Heart left ventricle (tissue), 16 donors: ENCODE measurements at regions of chr18 and their contacts with region 1.

Region 1: GRCh38 chr18:1779587-1779986 is 791.7 kb downstream of the METTL4 start:
- DNase-seq: no peak
- ATAC-seq: peak in 2 of 4 donors; percentile 19 to 32
- H3K4me3 ChIP-seq: no peak overlapping the region
- H3K27ac ChIP-seq: peak overlapping the region in 7 of 12 donors; percentile 31 to 77 (median 64)
- H3K4me1 ChIP-seq: peaks cover 0 to 16% (median 0%) of the 10 kb centered on the region in 12 donors
- H3K27me3 ChIP-seq: no peaks in the 10 kb centered on the region
- CTCF ChIP-seq: no peak
- POLR2A ChIP-seq: no peak

Region 2: DNA sequence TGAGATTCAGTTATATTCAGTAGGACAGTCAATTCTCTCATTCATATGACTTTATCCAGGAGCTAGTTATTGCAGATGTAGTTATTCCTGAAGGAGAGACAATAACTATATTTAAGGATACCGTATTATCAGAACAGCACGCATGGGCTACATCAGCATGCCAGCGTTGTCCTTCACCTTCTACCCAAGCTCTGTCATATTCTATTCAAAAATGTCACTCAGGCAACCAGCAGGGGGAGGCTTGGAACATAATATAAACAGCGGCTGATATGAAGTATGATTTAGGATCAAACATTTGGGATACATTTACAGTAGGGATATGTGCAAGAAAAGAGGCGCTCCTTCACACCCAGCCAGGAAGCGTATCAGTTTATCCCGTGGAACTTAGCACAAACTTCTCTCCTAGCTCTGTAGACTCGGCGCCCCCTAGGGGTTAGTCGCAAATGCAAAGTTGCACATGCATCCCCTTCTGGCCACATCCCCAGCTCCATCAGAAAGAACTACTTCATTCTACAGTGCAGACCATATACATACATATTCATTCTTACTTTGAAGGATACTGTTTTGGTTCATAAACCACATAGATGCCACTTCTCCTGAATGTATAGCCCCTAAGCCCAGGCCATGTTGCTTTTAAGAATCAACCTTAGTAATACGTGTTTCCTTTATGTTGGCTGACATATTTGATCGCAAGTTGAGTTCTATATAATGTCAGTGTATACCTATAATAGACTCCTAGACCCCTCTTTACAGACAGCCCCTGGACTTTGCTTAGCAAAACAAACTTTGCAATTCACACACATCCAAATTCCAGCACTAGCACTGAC is 115.5 kb before region 1 on chr18:
- intact Hi-C with region 1: loop called in 4 of 10 experiments (anchors 2 to 5 kb)
- DNase-seq: peak; percentile 22 to 70 (median 37)
- ATAC-seq: peak in 2 of 4 donors; percentile 13 to 53
- H3K4me3 ChIP-seq: no peak overlapping the region
- H3K27ac ChIP-seq: peak overlapping the region in 1 of 12 donors; percentile 31
- H3K4me1 ChIP-seq: peaks cover 0 to 4% (median 0%) of the 10 kb centered on the region in 12 donors
- H3K27me3 ChIP-seq: no peaks in the 10 kb centered on the region
- CTCF ChIP-seq: peak in 11 of 12 donors; percentile 12 to 66 (median 44)
- POLR2A ChIP-seq: no peak